ENCODE measurements at regions of chr12 and their contacts with region 1.

Region 1: DNA sequence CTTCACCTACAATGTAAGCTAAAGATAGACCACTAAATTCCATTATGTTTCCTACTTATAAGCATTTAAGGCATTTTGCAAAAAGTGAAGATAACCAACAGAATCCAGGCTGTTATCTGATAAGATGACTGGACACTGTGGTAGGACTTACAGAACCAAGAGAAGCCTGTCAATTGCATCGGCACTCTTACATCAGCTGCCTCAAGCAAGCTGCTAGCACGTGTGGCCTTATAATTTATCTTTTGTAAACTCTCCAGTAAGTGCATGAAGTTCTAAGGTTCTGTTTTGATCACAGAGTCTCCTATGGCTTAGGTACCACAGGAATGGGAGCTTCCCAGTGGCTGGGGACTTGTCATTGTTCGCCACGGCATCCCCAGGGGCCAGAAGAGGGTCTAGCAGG is 88.7 kb downstream of the TRAFD1 start:
- DNase-seq: no peak
- H3K4me3 Mint-ChIP-seq: no peak overlapping the region
- H3K27ac Mint-ChIP-seq: no peak overlapping the region
- H3K4me1 Mint-ChIP-seq: peaks cover 7% of the 10 kb centered on the region
- H3K27me3 Mint-ChIP-seq: no peaks in the 10 kb centered on the region
- CTCF ChIP-seq: no peak

Region 2: GRCh38 chr12:112198120-112198733 is 15.8 kb before region 1 on chr12:
- CTCF ChIA-PET with region 1: interaction called, 14 read pairs
- POLR2A ChIA-PET with region 1: no interaction called
- intact Hi-C with region 1: no loop called
- DNase-seq: peak; percentile 62
- H3K4me3 Mint-ChIP-seq: no peak overlapping the region
- H3K27ac Mint-ChIP-seq: no peak overlapping the region
- H3K4me1 Mint-ChIP-seq: no peaks in the 10 kb centered on the region
- H3K27me3 Mint-ChIP-seq: no peaks in the 10 kb centered on the region
- CTCF ChIP-seq: peak; percentile 68

Measured in MCF 10A (cell line).